ENCODE measurements at regions of chr6 and their contacts with region 1.

Region 1: GRCh38 chr6:119842191-119842590 is 492.6 kb upstream of the MAN1A1 start:
- DNase-seq: no peak

Region 2: DNA sequence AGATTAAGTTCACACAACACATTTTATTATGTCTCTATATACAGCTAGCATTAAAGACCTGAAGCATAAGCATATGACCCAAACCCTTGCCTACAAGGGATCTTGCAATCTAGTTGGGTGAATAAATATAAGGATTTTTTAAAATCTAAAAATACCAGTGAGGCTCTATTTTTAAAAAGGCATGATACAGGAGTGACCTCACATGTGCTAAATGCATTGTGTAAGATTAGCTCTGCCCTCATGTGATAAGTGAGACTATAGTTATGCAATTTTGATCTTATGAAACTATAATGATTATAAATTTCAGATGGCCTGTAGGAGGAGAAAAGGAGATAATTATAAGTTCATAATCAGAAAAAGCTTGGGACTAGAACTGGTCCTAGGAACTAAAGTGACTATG is 41.7 kb before region 1 on chr6:
- intact Hi-C with region 1: no loop called
- DNase-seq: no peak

Region 3: GRCh38 chr6:119865480-119866374 is 23.5 kb after region 1 on chr6:
- intact Hi-C with region 1: loop called in 1 of 2 experiments (anchors 1 kb)
- DNase-seq: no peak

Region 4: GRCh38 chr6:120219339-120219738 is 377.1 kb after region 1 on chr6:
- intact Hi-C with region 1: no loop called
- DNase-seq: no peak